Ascending aorta (tissue), 2 donors: ENCODE measurements at regions of chr15 and their contacts with region 1.

Region 1: DNA sequence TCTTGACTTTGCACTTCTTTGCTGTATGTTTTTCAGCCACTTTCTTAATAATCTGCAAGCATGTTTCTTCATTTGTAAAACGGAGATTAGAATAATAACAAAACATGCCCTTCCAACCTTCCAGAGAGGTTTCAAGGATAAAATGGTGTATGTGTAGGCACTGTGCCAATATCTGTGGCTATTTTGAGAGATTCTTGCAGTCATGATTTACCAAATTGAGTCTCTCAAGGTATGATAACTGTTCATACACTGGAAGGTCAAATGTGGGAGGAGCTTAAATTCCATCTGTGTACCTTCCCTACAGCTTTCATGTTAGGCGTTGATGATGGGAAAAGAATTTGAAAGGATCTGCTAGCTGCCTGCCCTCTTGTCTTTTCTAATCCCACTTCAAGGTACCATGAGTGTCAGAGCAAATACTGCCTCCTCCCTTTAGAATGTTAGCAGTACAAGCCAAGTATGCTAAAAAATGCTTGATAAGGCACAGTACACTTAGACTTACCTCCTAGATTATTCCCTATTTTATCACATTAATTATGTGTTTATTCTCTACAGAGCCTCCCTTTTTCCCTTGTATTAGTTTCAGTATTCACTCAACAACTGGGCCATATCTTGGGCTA is 78.0 kb upstream of the ST8SIA2 start:
- DNase-seq: no peak
- H3K4me3 ChIP-seq: no peak overlapping the region
- H3K27ac ChIP-seq: no peak overlapping the region
- H3K4me1 ChIP-seq: no peaks in the 10 kb centered on the region
- H3K27me3 ChIP-seq: no peaks in the 10 kb centered on the region
- CTCF ChIP-seq: no peak

Region 2: DNA sequence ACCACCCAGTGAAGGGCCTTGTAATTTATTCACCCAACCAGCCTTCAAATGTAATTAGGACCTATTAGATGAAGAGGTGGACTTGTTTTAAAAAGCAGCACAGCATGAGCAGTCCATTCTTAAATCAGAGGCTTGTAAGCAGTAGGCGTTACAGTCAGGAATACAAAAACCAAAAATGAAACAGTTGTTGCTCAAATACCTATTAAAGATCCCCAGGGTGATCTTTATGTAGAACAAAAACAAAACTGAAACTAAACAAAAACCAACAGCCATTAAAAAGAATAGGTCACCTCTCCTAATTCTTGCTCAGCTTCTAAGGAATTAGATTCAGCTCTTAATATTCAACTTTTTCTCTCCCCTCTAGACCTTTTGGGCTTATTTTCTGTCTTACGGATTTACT is 26.9 kb before region 1 on chr15:
- intact Hi-C with region 1: loop called (anchors 2 kb)
- DNase-seq: no peak
- H3K4me3 ChIP-seq: no peak overlapping the region
- H3K27ac ChIP-seq: no peak overlapping the region
- H3K4me1 ChIP-seq: no peaks in the 10 kb centered on the region
- H3K27me3 ChIP-seq: no peaks in the 10 kb centered on the region
- CTCF ChIP-seq: no peak